G401 (cell line): ENCODE measurements at regions of chr12 and their contacts with region 1.

Region 1: GRCh38 chr12:42809226-42809625 is 219.7 kb upstream of the PRICKLE1 start:
- DNase-seq: no peak

Region 2: GRCh38 chr12:42730291-42730690 is 78.9 kb before region 1 on chr12:
- in situ Hi-C with region 1: loop called (anchors 5 kb)
- DNase-seq: no peak

Region 3: GRCh38 chr12:42873401-42873800 is 64.2 kb after region 1 on chr12:
- in situ Hi-C with region 1: no loop called
- DNase-seq: no peak